ENCODE measurements at regions of chr7 and their contacts with region 1.

Region 1: DNA sequence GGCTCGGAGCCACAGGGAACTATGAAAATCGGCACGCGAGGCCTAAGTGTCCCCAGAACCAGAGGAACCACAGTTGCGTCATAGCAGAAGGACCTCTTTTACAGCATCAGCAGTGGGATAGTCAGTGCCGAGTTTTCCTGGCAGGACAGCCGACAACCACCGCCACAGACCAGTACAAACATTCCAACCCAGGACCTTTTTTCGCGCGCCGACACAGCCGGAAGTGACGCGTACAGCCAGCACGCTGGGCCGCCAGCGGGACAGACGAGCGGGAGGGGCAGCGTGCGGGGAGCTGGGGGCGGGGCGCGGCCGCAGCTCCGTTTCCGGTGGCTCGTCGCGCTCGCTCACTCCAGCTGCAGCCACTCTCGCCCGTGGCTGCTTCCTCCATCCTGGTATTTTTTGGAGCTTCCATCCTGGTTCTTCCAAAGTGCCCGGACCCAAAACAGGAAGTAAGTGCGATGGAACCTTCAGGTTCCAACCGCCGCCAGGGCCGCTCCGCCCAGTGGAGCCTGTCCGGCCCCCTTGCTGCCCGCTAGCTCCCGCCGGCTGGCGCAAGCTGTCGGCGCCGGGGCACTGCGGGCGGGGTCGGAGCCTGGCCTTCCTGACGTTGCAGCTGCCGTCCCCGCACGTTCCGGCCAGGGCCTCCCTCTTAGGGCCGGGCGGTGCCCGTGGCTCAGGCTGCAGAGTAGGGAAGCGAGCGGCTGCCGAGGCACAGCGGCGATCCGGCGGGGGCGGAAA is at the start of gene DMTF1:
- DNase-seq: peak; percentile 99

Region 2: DNA sequence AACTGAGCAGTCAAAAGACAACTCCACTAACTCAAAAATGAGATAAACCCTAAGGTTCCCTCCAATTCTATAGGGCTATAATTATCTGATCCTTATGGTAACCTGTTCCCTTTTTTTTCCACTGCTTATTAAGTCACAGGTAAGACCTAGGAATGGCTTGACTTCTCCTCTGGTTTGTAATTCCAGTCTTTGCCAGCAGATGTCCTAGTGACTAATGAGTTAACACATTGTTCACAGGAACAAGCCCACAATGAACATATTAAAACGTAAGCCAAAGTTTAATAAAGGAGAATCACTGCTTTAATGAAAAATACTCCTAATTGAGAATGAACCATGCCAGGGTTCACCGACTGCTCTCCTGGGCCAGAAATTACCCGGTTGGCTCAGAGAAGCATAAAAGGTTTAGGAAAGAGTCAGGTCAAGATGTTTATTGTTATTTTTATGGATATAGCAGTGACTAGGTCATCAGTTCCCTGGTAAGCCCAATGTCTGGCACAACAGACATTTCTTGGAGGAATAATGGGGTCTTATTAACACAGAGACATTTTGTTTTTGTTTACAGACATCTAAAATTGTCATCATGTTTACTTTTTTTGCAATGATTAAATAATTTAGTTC is 213.0 kb before region 1 on chr7:
- in situ Hi-C with region 1: loop called (anchors 25 kb)
- DNase-seq: peak; percentile 86

Region 3: GRCh38 chr7:87404674-87405073 is 252.4 kb after region 1 on chr7:
- in situ Hi-C with region 1: no loop called
- DNase-seq: no peak

Region 4: GRCh38 chr7:87580636-87581035 is 428.4 kb after region 1 on chr7:
- in situ Hi-C with region 1: no loop called
- DNase-seq: no peak